WTC11 (cell line): ENCODE measurements at regions of chr16 and their contacts with region 1.

Region 1: DNA sequence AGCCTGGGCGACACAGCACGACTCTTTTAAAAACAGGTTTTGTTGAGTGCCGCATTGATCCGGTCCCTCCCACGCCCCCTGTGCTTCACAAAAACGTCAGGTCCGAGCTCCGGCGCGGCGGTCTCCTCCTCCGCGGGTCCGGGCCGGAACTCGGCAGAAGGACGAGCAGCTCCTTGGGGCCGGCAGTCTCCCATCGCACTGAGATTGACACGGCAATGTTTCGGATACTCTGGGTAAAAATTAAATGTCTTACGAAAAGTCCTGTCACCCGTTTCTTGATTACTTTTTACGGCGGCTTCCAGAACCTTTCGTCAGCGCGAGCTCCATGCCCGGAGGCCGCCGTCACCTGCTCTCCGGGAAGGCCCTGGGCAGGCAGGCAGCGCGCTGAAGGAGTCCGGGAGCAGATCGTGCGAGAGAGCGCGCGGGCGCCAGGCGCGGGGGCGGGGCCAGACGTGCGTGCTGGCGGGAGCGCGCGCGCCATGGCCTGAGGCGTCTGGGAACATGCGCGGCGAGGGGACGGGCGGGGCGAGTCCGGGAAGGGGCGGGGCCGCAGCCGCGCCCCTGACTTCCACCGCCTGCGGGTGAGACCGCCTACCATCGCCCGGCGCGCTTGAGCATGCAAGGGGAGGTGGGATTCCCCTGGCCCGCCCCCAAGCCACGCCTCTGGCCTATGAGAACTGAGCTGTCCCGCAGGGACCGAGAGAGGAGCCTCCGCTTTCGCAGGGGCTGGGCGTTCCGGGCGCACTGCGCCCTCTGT is 11.7 kb upstream of the SRL start:
- DNase-seq: peak; percentile 100
- ATAC-seq: peak; percentile 97
- H3K4me3 Mint-ChIP-seq: peak overlapping the region; percentile 87
- H3K27ac Mint-ChIP-seq: peak overlapping the region; percentile 96
- H3K4me1 Mint-ChIP-seq: peaks cover 8% of the 10 kb centered on the region; the same call in 1 of the 2 replicates
- H3K27me3 Mint-ChIP-seq: no peaks in the 10 kb centered on the region
- CTCF ChIP-seq: no peak

Region 2: DNA sequence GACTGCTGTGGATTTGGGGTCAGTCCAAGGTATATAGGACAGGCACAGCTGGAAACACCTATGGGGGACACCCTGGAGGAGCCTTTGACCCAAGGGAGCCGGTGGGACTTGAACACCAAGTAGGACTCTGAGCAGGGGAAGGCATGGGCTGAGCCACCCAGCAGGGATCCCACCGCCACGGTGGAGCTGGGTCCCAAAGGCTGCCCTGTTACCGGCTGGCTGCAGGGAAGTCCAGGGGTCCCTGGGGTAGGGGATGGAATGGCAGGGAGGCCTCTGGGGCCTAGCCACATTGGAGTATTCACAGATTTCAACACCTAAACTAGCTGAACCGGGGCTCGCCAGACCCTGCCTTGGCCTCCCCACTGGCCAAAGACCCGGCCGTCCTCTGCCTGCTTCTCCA is 333.4 kb before region 1 on chr16:
- CTCF ChIA-PET with region 1: no interaction called
- POLR2A ChIA-PET with region 1: no interaction called
- DNase-seq: no peak
- ATAC-seq: no peak
- H3K4me3 Mint-ChIP-seq: no peak overlapping the region
- H3K27ac Mint-ChIP-seq: no peak overlapping the region
- H3K4me1 Mint-ChIP-seq: peaks cover 4% of the 10 kb centered on the region
- H3K27me3 Mint-ChIP-seq: peaks cover 5% of the 10 kb centered on the region; the same call in 1 of the 2 replicates
- CTCF ChIP-seq: no peak

Region 3: DNA sequence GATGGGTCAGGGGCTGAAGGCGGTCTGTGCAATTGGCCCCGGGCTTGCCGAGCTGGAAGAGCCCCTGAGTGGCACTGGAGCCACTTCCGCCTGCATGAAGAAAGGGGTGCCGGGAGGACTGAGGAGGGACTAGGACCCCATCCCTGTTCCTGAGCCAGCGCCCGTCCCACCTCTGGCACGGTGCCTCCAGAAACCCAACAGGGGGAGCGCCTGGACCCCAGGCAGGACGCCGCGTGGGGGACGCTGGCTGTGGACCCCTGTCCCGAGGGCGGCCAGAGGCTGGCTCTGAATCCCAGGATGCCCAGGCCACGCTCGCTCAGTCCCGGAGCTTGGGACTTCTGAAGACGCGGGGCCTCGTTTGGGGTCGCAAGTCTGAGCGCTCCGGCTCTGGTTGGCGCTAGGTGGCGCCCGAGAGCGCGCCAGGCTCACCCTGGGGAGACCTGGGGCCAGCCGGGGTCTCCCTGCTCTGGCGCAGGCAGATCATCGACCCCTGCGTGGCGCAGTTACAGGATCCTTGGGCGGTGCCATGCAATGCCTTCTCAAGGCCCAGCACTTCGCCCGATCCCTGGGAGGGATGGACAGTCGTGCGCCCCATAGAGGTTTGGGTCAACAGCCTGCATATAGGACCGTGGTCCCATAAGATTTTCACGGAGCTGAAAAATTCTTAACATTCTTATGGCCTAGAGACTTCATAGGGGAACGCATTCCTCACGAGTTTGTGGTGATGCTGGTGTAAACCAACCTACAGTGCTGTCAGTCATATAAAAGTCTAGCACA is 314.5 kb before region 1 on chr16:
- CTCF ChIA-PET with region 1: interaction called, 35 read pairs
- POLR2A ChIA-PET with region 1: no interaction called
- DNase-seq: peak; percentile 88
- ATAC-seq: peak; percentile 96
- H3K4me3 Mint-ChIP-seq: no peak overlapping the region; the same call in 1 of the 2 replicates
- H3K27ac Mint-ChIP-seq: no peak overlapping the region
- H3K4me1 Mint-ChIP-seq: peaks cover 5% of the 10 kb centered on the region
- H3K27me3 Mint-ChIP-seq: 0 out of 2 replicates have a peak, but pooled peaks cover 2% of the 10 kb centered on the region
- CTCF ChIP-seq: peak; percentile 92

Region 4: GRCh38 chr16:4046221-4046620 is 207.4 kb before region 1 on chr16:
- CTCF ChIA-PET with region 1: interaction called, 12 read pairs
- POLR2A ChIA-PET with region 1: no interaction called
- DNase-seq: no peak
- ATAC-seq: no peak
- H3K4me3 Mint-ChIP-seq: no peak overlapping the region
- H3K27ac Mint-ChIP-seq: no peak overlapping the region
- H3K4me1 Mint-ChIP-seq: no peaks in the 10 kb centered on the region
- H3K27me3 Mint-ChIP-seq: no peaks in the 10 kb centered on the region
- CTCF ChIP-seq: no peak

Region 5: GRCh38 chr16:4200000-4200780 is 53.4 kb before region 1 on chr16:
- CTCF ChIA-PET with region 1: interaction called, 30 read pairs
- POLR2A ChIA-PET with region 1: interaction called, 4 read pairs
- DNase-seq: peak; percentile 74
- ATAC-seq: peak; percentile 80
- H3K4me3 Mint-ChIP-seq: no peak overlapping the region
- H3K27ac Mint-ChIP-seq: no peak overlapping the region
- H3K4me1 Mint-ChIP-seq: peaks cover 2% of the 10 kb centered on the region; the same call in 1 of the 2 replicates
- H3K27me3 Mint-ChIP-seq: no peaks in the 10 kb centered on the region
- CTCF ChIP-seq: no peak

Region 6: GRCh38 chr16:4271176-4272066 is 17.8 kb after region 1 on chr16:
- CTCF ChIA-PET with region 1: interaction called, 70 read pairs
- POLR2A ChIA-PET with region 1: interaction called, 22 read pairs
- DNase-seq: peak; percentile 94
- ATAC-seq: peak; percentile 75
- H3K4me3 Mint-ChIP-seq: peak overlapping the region; percentile 69
- H3K27ac Mint-ChIP-seq: peak overlapping the region; percentile 80
- H3K4me1 Mint-ChIP-seq: peaks cover 14% of the 10 kb centered on the region
- H3K27me3 Mint-ChIP-seq: no peaks in the 10 kb centered on the region
- CTCF ChIP-seq: no peak

Region 7: GRCh38 chr16:4323845-4324478 is 70.4 kb after region 1 on chr16:
- CTCF ChIA-PET with region 1: interaction called, 48 read pairs
- POLR2A ChIA-PET with region 1: interaction called, 7 read pairs
- DNase-seq: peak; percentile 68
- ATAC-seq: peak; percentile 75
- H3K4me3 Mint-ChIP-seq: no peak overlapping the region
- H3K27ac Mint-ChIP-seq: peak overlapping the region; percentile 93
- H3K4me1 Mint-ChIP-seq: peaks cover 29% of the 10 kb centered on the region
- H3K27me3 Mint-ChIP-seq: no peaks in the 10 kb centered on the region
- CTCF ChIP-seq: no peak

Region 8: DNA sequence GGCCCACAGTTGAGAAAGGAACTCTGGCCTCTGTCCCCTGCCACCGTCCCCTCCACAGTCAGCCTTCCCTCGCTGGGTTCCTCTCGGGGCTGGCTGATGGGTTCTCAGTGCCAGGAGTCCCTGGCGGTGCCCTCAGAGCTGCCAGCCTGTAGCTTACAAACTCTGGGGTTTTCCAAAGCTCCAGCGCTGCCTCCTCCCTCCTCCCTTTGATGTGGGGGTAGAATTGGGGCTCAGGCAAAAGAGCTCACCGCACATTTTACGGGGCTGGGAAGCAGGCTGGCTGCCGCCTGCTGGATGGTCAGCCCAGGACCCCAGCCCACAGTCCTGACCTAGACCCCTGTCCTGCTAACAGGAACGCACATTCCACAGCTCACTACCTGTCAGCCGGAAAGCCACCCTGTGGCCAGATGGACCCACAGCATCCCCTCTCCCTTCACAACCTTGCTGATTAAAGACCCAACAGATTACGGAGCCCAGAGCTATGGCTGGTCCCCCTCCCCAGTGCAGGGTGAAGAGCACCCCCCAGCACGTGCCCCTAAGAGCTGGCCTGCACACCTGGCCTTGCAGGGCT is 124.1 kb after region 1 on chr16:
- CTCF ChIA-PET with region 1: interaction called, 14 read pairs
- POLR2A ChIA-PET with region 1: no interaction called
- DNase-seq: no peak
- ATAC-seq: peak; percentile 46
- H3K4me3 Mint-ChIP-seq: no peak overlapping the region
- H3K27ac Mint-ChIP-seq: peak overlapping the region; percentile 64
- H3K4me1 Mint-ChIP-seq: peaks cover 47% of the 10 kb centered on the region
- H3K27me3 Mint-ChIP-seq: no peaks in the 10 kb centered on the region
- CTCF ChIP-seq: no peak

Region 9: GRCh38 chr16:4467916-4468315 is 214.3 kb after region 1 on chr16:
- CTCF ChIA-PET with region 1: no interaction called
- POLR2A ChIA-PET with region 1: no interaction called
- DNase-seq: no peak
- ATAC-seq: no peak
- H3K4me3 Mint-ChIP-seq: no peak overlapping the region
- H3K27ac Mint-ChIP-seq: no peak overlapping the region
- H3K4me1 Mint-ChIP-seq: peaks cover under 1% of the 10 kb centered on the region
- H3K27me3 Mint-ChIP-seq: no peaks in the 10 kb centered on the region
- CTCF ChIP-seq: no peak

Region 10: DNA sequence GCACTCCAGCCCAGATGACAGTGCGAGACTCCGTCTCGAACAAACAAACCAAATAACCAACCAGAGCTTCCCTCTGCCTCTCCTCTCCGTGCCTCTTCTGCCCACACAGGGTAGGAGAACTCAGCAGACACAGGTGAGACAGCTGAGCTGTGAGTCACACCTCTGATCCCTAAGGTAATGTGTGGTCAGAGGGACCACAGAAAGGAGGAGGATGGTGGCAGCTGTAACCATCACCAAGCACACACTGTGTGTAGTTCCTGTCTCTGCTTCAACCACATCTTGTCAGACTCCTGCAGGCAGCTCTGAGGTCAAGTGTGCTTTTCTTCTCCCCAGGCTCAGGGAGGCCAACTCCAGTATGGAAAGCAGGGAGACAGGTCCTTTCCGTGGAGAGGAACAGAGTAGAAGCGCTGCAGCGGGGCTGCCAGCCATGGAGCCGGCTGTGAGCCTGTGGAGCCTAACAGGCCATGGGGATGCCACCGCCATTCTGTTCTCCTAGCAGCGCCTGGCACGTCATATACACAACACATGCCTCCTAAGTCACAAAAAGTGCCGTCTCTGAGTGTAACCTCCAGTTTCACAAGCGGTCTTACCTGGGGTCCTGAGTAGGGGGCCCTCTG is 446.9 kb after region 1 on chr16:
- CTCF ChIA-PET with region 1: no interaction called
- POLR2A ChIA-PET with region 1: no interaction called
- DNase-seq: no peak
- ATAC-seq: no peak
- H3K4me3 Mint-ChIP-seq: no peak overlapping the region
- H3K27ac Mint-ChIP-seq: no peak overlapping the region
- H3K4me1 Mint-ChIP-seq: no peaks in the 10 kb centered on the region
- H3K27me3 Mint-ChIP-seq: no peaks in the 10 kb centered on the region
- CTCF ChIP-seq: no peak